ENCODE measurements at regions of chr3 and their contacts with region 1.

Region 1: GRCh38 chr3:43345877-43346276 is 59.5 kb downstream of the SNRK start:
- DNase-seq: no peak
- H3K4me3 ChIP-seq: no peak overlapping the region
- H3K4me3 Mint-ChIP-seq: peak overlapping the region in 7 of 8 donors; percentile 23 to 76 (median 61)
- H3K27ac ChIP-seq: no peak overlapping the region
- H3K27ac Mint-ChIP-seq: peak overlapping the region; percentile 90 to 98 (median 95)
- H3K4me1 ChIP-seq: peaks cover 84% of the 10 kb centered on the region
- H3K4me1 Mint-ChIP-seq: peaks cover 52 to 84% (median 68%) of the 10 kb centered on the region in 4 donors
- H3K27me3 ChIP-seq: no peaks in the 10 kb centered on the region
- H3K27me3 Mint-ChIP-seq: no peaks in the 10 kb centered on the region

Region 2: DNA sequence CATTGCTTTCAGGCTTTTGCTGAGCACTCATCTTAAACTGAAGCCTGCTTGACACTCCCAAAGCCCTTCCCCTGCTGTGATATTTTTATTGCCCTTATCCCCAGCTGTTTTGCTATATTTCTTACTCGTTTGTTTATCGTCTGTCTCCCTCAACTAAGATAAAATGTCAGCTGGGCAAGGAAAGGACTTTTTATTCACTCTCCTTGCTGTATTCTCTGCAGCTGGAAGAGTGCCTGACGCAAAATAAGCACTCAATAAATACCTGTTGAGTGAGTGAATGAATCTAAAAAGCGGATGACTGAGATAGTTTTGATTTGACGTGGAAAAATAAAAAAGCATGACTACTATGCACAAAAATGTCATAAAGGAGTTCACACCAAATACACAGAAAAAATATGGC is 155.2 kb before region 1 on chr3:
- CTCF ChIA-PET with region 1: no interaction called
- POLR2A ChIA-PET with region 1: interaction called, 13 read pairs
- intact Hi-C with region 1: no loop called
- DNase-seq: no peak
- H3K4me3 ChIP-seq: no peak overlapping the region
- H3K4me3 Mint-ChIP-seq: no peak overlapping the region
- H3K27ac ChIP-seq: no peak overlapping the region
- H3K27ac Mint-ChIP-seq: no peak overlapping the region
- H3K4me1 ChIP-seq: peaks cover 46% of the 10 kb centered on the region
- H3K4me1 Mint-ChIP-seq: peaks cover 34 to 44% (median 40%) of the 10 kb centered on the region in 4 donors
- H3K27me3 ChIP-seq: no peaks in the 10 kb centered on the region
- H3K27me3 Mint-ChIP-seq: no peaks in the 10 kb centered on the region

Region 3: GRCh38 chr3:43309372-43310305 is 36.2 kb before region 1 on chr3:
- CTCF ChIA-PET with region 1: no interaction called
- POLR2A ChIA-PET with region 1: interaction called, 3 read pairs
- intact Hi-C with region 1: loop called (anchors 5 kb)
- DNase-seq: no peak
- H3K4me3 ChIP-seq: no peak overlapping the region
- H3K4me3 Mint-ChIP-seq: peak overlapping the region in 4 of 8 donors; percentile 3 to 87 (median 50)
- H3K27ac ChIP-seq: no peak overlapping the region
- H3K27ac Mint-ChIP-seq: peak overlapping the region in 4 of 7 donors; percentile 3 to 76 (median 28)
- H3K4me1 ChIP-seq: peaks cover 73% of the 10 kb centered on the region
- H3K4me1 Mint-ChIP-seq: peaks cover 53 to 84% (median 66%) of the 10 kb centered on the region in 4 donors
- H3K27me3 ChIP-seq: no peaks in the 10 kb centered on the region
- H3K27me3 Mint-ChIP-seq: no peaks in the 10 kb centered on the region

Region 4: DNA sequence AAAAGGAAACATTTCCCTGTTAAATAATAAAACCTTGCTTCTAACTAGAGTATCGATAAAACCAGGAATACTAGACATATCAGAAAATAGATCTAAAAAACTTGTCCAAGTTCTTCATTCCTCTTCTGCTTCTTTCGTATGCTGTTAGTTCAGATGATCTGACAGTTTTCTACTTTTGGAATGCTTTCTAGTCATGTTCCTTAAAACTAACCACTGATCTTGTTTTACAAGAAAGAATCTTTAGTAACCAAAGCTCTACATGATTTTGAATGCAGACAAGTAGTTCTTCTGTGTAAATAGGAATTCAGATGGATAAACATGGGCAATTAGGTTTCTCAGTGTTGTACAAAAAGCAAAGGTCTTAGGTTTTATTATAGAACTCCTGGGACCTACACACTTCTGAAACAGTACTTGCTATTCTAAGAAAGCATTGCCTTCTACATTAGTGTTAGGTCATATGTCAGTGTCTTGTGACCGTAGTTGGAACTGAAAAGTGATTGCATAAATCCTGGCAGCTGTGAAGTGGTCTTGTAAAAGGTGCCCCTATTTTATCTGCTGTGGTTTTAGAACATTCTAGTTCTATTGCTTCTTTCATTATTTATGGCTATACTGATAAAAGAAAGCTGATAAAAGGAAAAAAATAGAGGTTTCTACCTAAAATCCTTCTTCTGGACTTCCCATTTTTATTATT is 18.8 kb before region 1 on chr3:
- CTCF ChIA-PET with region 1: no interaction called
- POLR2A ChIA-PET with region 1: interaction called, 4 read pairs
- intact Hi-C with region 1: loop called (anchors 2 kb)
- DNase-seq: no peak
- H3K4me3 ChIP-seq: no peak overlapping the region
- H3K4me3 Mint-ChIP-seq: peak overlapping the region in 7 of 8 donors; percentile 12 to 72 (median 46)
- H3K27ac ChIP-seq: no peak overlapping the region
- H3K27ac Mint-ChIP-seq: peak overlapping the region; percentile 45 to 91 (median 77)
- H3K4me1 ChIP-seq: peaks cover 74% of the 10 kb centered on the region
- H3K4me1 Mint-ChIP-seq: peaks cover 48 to 81% (median 66%) of the 10 kb centered on the region in 4 donors
- H3K27me3 ChIP-seq: no peaks in the 10 kb centered on the region
- H3K27me3 Mint-ChIP-seq: no peaks in the 10 kb centered on the region

Region 5: DNA sequence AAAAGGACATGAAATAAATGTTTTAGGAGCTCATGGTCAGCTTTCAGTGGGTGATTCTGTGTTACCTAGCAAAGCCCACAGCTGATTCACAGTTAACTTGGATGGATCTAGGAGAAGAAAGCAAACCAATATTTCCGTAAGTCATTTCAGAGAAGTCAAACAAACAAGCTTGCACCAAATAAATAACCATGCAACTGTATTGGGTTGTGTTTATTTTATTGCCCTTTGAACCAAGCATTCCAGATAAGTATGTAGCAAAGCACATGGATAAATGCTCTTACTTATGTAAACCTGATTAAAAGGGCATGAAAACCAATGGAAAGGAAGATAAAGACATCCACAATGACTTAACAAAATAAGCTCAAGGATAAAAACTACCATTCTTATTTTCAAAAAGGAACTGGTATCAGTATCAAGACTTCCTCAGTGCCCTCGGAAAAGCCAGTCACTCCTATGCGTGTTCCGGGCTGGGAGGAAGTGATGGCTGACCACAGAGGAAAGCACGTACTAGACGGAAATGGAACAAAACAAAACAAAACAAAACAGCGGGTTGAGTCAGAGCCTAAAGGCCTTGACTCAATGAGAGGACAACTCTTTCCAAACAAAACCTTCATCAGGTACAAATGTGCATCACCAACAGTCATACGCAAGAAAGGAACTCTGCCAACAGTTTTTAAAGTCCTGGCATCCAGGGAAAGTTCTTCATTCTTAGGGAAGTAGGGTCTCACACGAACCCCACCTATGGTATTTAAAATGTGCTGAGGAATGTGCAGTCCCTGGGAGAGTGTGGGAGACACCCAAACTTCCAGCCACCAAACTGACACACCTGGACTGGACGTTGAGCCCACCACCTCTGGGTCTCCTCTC is 43.7 kb after region 1 on chr3:
- CTCF ChIA-PET with region 1: interaction called, 7 read pairs
- POLR2A ChIA-PET with region 1: interaction called, 44 read pairs
- intact Hi-C with region 1: no loop called
- DNase-seq: peak; percentile 84 to 92 (median 87)
- H3K4me3 ChIP-seq: peak overlapping the region in 1 of 2 donors; percentile 48
- H3K4me3 Mint-ChIP-seq: peak overlapping the region; percentile 60 to 81 (median 68)
- H3K27ac ChIP-seq: peak overlapping the region; percentile 64
- H3K27ac Mint-ChIP-seq: peak overlapping the region; percentile 85 to 98 (median 96)
- H3K4me1 ChIP-seq: peaks cover 61% of the 10 kb centered on the region
- H3K4me1 Mint-ChIP-seq: peaks cover 66 to 97% (median 79%) of the 10 kb centered on the region in 4 donors
- H3K27me3 ChIP-seq: no peaks in the 10 kb centered on the region
- H3K27me3 Mint-ChIP-seq: no peaks in the 10 kb centered on the region

Region 6: DNA sequence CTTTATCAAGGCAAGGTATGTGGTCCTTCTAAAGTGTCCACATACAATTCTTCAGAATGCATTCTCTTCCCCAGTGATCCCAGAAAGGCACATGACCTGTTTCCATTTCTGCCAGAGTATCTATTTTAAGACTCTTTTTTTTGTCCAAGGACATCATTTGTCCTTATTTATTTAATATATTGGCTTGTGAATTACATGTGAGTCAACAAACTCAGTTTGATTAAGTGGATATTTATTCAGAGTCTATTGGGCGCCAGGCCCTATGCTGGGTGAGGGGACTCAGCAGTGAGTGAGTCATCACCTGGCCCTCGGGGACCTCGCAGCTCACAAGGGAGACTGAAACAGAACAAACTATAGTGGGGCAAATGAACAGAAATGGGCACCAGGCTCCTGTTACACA is 77.3 kb after region 1 on chr3:
- CTCF ChIA-PET with region 1: no interaction called
- POLR2A ChIA-PET with region 1: no interaction called
- intact Hi-C with region 1: no loop called
- DNase-seq: no peak
- H3K4me3 ChIP-seq: no peak overlapping the region
- H3K4me3 Mint-ChIP-seq: no peak overlapping the region
- H3K27ac ChIP-seq: no peak overlapping the region
- H3K27ac Mint-ChIP-seq: no peak overlapping the region
- H3K4me1 ChIP-seq: no peaks in the 10 kb centered on the region
- H3K4me1 Mint-ChIP-seq: peaks cover 0 to 3% (median 0%) of the 10 kb centered on the region in 4 donors
- H3K27me3 ChIP-seq: no peaks in the 10 kb centered on the region
- H3K27me3 Mint-ChIP-seq: peaks cover 0 to 1% of the 10 kb centered on the region in 2 donors

Measured in CD4-positive, alpha-beta memory T cell (primary cell).